Dorsolateral prefrontal cortex (tissue), 120 donors: ENCODE measurements at regions of chr9 and their contacts with region 1.

Region 1: DNA sequence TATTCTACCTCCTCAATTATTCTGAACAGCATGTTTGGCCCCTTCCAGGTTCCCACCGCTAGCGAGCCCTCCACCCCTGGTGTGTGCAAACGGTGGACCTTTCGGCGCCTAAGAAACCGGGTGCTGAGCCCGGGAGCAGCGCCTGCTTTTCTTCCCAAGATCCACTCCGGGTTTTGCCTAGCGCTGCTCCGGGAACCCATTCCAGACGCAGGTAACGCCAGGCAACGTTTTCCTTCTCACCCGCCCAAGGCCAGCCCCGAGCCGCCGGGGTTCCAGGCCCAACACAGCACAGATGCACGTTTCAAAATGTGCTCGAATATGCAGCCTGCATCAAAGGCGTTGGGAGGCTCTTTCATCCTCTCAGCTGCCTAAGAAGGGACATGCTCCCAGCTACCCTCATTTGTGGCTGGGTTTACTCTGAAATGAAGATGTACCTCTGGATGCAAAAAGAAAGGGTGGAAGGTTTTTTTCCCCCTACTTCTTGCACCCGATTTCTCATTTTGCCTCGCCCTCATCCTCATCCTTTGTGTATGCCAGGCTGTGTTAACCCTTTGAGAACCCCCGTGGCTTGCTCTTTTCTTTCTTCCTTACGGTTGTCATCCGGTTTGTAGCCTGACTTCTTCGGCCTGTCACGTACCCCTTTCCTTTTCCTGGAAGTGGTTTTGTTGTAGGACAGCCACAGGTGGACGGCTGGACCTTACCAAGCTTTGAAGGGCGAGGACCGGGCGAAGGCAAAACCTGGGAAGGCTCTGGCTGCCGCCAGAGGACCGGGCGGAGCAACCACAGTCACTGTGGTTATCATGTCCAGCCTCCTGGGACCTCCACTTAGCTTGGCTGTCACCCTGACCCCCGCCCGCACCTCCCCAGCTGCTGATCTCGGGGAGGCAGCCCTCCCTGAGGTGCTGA is 226.9 kb downstream of the SMARCA2 start:
- DNase-seq: peak; percentile 77 to 93 (median 88)
- H3K4me3 ChIP-seq: peak overlapping the region; percentile 37 to 82 (median 65)
- H3K27ac ChIP-seq: peak overlapping the region; percentile 32 to 94 (median 87)
- H3K27me3 ChIP-seq: no peaks in the 10 kb centered on the region
- CTCF ChIP-seq: peak in 17 of 56 donors; percentile 2 to 48 (median 26)

Region 2: DNA sequence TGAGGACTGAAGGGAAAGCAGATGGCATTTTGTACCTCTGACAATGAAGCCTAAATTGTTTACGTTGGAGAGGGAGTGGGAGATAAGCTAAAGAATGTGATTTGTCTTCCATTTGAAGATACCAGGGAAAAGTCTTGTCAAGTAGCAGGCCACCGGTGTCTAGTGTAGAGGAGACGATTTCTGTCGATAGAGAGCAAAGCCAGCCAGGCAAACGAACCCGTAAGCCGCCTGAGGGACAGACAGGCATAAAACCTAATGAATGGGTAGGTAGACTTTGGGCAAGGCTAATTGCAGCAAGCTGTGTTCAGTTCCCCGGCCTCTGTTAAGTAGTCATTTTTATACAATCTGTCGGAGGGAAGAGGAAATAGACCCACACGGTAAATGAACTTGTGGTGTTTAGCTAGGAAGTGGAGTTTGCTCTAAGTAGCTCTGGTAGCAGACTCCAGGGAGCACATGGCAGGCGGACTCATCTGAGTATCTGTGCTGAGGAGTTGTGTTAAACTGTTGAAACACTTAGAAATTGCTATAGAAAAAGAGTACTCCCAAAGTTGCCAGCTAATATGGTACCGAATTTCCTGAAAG is 198.1 kb before region 1 on chr9:
- intact Hi-C with region 1: no loop called
- DNase-seq: no peak
- H3K4me3 ChIP-seq: no peak overlapping the region
- H3K27ac ChIP-seq: peak overlapping the region in 2 of 59 donors; percentile 7 to 19
- H3K27me3 ChIP-seq: no peaks in the 10 kb centered on the region
- CTCF ChIP-seq: no peak

Region 3: DNA sequence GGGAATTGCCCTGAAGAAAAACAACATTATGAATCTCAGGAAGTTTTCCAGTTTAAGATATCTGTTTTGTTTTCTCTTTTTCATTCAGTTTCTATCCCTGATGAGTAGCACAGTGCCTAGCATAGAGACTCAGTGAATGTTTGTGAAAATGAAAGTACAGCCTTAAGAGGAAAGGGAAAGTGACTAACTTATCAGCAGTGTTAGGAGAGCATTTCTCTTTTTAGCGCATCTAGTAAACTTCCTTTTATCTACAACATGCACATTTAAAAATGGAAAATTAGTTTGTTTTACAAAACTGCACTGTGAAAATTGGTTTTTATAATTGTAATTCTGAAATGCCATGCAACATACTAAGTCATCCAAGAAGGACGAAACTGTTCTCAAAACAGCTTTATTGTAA is 116.2 kb before region 1 on chr9:
- intact Hi-C with region 1: loop called in 1 of 2 experiments (anchors 10 kb)
- DNase-seq: no peak
- H3K4me3 ChIP-seq: peak overlapping the region in 43 of 59 donors; percentile 0 to 52 (median 24)
- H3K27ac ChIP-seq: peak overlapping the region in 55 of 59 donors; percentile 4 to 88 (median 70)
- H3K27me3 ChIP-seq: no peaks in the 10 kb centered on the region
- CTCF ChIP-seq: no peak

Region 4: GRCh38 chr9:2285416-2286332 is 43.6 kb after region 1 on chr9:
- intact Hi-C with region 1: no loop called
- DNase-seq: no peak
- H3K4me3 ChIP-seq: no peak overlapping the region
- H3K27ac ChIP-seq: no peak overlapping the region
- H3K27me3 ChIP-seq: no peaks in the 10 kb centered on the region
- CTCF ChIP-seq: no peak

Region 5: GRCh38 chr9:2418619-2419018 is 176.5 kb after region 1 on chr9:
- intact Hi-C with region 1: loop called in 1 of 2 experiments (anchors 10 kb)
- DNase-seq: peak in 1 of 10 donors; percentile 5
- H3K4me3 ChIP-seq: no peak overlapping the region
- H3K27ac ChIP-seq: no peak overlapping the region
- H3K27me3 ChIP-seq: no peaks in the 10 kb centered on the region
- CTCF ChIP-seq: no peak

Region 6: GRCh38 chr9:2531481-2531880 is 289.4 kb after region 1 on chr9:
- intact Hi-C with region 1: no loop called
- DNase-seq: no peak
- H3K4me3 ChIP-seq: no peak overlapping the region
- H3K27ac ChIP-seq: no peak overlapping the region
- H3K27me3 ChIP-seq: no peaks in the 10 kb centered on the region
- CTCF ChIP-seq: no peak

Region 7: GRCh38 chr9:2837915-2838314 is 595.8 kb after region 1 on chr9:
- intact Hi-C with region 1: loop called in 1 of 2 experiments (anchors 5 kb)
- DNase-seq: no peak
- H3K4me3 ChIP-seq: peak overlapping the region in 44 of 59 donors; percentile 0 to 60 (median 35)
- H3K27ac ChIP-seq: peak overlapping the region in 25 of 59 donors; percentile 1 to 76 (median 43)
- H3K27me3 ChIP-seq: no peaks in the 10 kb centered on the region
- CTCF ChIP-seq: peak in 37 of 56 donors; percentile 3 to 53 (median 31)